HCT116 (cell line): ENCODE measurements at regions of chr9 and their contacts with region 1.

Region 1: DNA sequence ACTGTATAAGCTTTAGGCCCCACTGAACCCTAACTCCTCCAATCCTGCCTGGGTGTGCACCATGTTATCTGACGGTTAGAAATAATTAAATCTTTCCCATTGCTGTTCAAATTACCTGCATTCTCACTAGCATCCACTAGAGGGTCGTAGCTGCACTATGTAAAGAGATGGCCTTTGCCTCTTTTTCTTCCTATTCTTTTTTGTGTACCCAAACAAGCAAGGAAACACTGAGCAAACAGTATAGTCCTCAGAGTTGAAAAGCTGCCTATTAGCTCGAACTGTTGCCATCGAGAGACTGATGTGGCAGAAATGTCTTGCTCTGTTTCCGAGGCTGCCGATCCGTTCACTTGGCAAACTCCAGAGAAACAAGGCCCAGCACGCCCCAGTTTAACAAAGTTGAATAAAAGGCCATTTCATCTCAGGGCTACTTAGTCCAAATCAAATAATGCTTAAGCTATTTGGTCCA is 163.8 kb upstream of the TRPM3 start:
- DNase-seq: peak; percentile 43
- ATAC-seq: peak; percentile 90
- H3K4me3 ChIP-seq: no peak overlapping the region
- H3K27ac ChIP-seq: no peak overlapping the region
- H3K4me1 ChIP-seq: no peaks in the 10 kb centered on the region
- H3K27me3 ChIP-seq: peaks cover 18% of the 10 kb centered on the region
- CTCF ChIP-seq: peak; percentile 56 to 88 (median 81); a peak in 5 of 6 replicates
- POLR2A ChIP-seq: no peak
- RAD21 ChIP-seq: peak; percentile 79

Region 2: DNA sequence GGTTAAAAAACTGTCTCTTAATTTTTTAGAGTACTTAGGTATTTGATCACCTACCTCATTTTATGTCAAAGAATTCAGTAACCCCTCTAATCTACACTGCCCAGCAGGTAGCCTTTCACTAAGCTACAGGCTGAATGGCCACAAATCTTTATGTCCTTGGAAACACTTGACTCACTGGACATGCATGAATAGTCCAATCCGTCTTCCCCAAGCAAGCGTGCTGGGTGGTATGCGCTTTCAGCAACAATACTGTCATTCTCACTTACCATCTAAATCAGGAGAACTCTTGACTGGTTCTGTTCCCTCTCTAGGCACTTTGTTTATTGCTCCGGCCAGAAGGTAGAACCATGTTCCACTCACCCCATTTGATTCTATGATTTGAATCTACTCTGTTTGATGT is 236.9 kb before region 1 on chr9:
- CTCF ChIA-PET with region 1: no interaction called
- POLR2A ChIA-PET with region 1: no interaction called
- RAD21 ChIA-PET with region 1: no interaction called
- intact Hi-C with region 1: no loop called
- DNase-seq: no peak
- ATAC-seq: no peak
- H3K4me3 ChIP-seq: no peak overlapping the region
- H3K27ac ChIP-seq: no peak overlapping the region
- H3K4me1 ChIP-seq: no peaks in the 10 kb centered on the region
- H3K27me3 ChIP-seq: peaks cover 28% of the 10 kb centered on the region
- CTCF ChIP-seq: no peak
- POLR2A ChIP-seq: no peak
- RAD21 ChIP-seq: no peak

Region 3: DNA sequence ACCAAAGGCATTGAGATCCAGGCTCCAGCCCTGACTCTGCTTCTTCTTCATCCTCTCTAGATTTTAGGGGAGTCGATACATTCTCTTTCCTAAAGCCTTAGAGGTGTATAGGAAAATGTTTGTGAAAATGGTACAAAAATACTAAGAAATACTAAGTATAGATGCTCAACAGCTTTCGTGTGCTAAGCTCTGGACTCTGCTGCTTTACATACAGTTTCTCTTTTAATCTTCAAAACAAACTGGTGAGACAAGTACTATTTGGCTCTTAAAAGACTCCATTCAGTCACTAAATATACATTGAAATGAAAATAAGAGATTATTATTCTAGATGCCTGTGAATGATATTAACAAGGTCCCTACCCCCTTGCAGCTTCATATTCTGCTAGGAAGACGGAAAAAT is 10.7 kb after region 1 on chr9:
- CTCF ChIA-PET with region 1: interaction called, 15 read pairs
- POLR2A ChIA-PET with region 1: no interaction called
- RAD21 ChIA-PET with region 1: no interaction called
- intact Hi-C with region 1: no loop called
- DNase-seq: no peak
- ATAC-seq: no peak
- H3K4me3 ChIP-seq: no peak overlapping the region
- H3K27ac ChIP-seq: no peak overlapping the region
- H3K4me1 ChIP-seq: no peaks in the 10 kb centered on the region
- H3K27me3 ChIP-seq: 0 out of 2 replicates have a peak, but pooled peaks cover 4% of the 10 kb centered on the region
- CTCF ChIP-seq: no peak
- POLR2A ChIP-seq: no peak
- RAD21 ChIP-seq: no peak

Region 4: GRCh38 chr9:71638627-71639026 is 353.4 kb after region 1 on chr9:
- CTCF ChIA-PET with region 1: no interaction called
- POLR2A ChIA-PET with region 1: no interaction called
- RAD21 ChIA-PET with region 1: no interaction called
- intact Hi-C with region 1: no loop called
- DNase-seq: no peak
- ATAC-seq: no peak
- H3K4me3 ChIP-seq: no peak overlapping the region
- H3K27ac ChIP-seq: no peak overlapping the region
- H3K4me1 ChIP-seq: no peaks in the 10 kb centered on the region
- H3K27me3 ChIP-seq: no peaks in the 10 kb centered on the region
- CTCF ChIP-seq: no peak
- POLR2A ChIP-seq: no peak
- RAD21 ChIP-seq: no peak

Region 5: DNA sequence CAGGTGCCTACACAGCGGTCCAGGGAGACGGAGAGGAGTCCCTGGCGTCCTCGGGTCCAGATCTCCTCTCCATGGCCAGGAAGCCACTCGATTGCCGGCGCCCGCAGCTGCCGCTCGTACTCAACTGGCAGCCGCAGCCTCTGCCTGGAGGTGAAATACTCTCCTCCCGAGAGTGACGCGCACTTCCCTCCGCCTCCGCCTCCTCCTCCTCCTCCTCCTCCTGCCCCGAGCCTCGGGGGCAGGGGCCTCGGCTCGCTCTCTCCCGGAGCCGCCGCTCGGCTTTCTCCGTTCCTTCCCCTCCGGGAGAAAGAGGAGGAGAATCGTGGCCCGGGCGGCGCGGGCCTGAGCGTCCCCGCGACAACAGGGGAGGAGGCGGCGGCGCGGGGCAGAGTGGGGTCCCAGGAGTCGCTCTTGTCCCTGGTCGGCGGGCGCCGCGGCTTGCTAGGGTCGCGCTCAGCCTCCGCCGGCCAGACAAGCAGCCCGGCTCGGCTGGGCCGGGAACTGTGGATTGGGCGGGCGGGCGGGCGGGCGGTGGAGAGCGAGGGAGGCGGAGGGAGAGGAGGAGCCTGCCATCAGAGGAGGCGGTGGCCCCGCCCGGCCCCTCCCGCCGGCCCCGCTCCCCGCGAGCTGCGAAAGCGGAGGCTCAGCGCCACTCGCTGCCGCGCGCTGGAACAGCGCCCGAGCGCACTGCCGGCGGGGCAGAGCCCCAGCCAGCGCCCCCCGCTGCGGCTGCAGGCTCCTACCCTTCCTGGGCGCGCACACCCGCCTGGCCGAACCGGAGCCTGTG is 483.4 kb after region 1 on chr9 and contains the start of gene CEMIP2:
- CTCF ChIA-PET with region 1: interaction called, 7 read pairs
- POLR2A ChIA-PET with region 1: no interaction called
- RAD21 ChIA-PET with region 1: no interaction called
- intact Hi-C with region 1: loop called (anchors 5 kb)
- DNase-seq: peak; percentile 62
- ATAC-seq: peak; percentile 82
- H3K4me3 ChIP-seq: peak within 1 kb of the TSS; percentile 76 to 82
- H3K27ac ChIP-seq: peak within 1 kb of the TSS; percentile 79
- H3K4me1 ChIP-seq: peaks cover 21 to 46% of the 10 kb centered on the region in 2 experiments
- H3K27me3 ChIP-seq: no peaks in the 10 kb centered on the region
- CTCF ChIP-seq: peak in 2 of 3 experiments; percentile 29 to 43; a peak in 4 of 6 replicates
- POLR2A ChIP-seq: peak; percentile 42
- RAD21 ChIP-seq: peak; percentile 68
- total RNA-seq, gene CEMIP2: 14.3 TPM

Region 6: GRCh38 chr9:71819115-71819739 is 534.0 kb after region 1 on chr9:
- CTCF ChIA-PET with region 1: interaction called, 7 read pairs
- POLR2A ChIA-PET with region 1: no interaction called
- RAD21 ChIA-PET with region 1: no interaction called
- intact Hi-C with region 1: loop called (anchors 5 kb)
- DNase-seq: peak; percentile 10
- ATAC-seq: no peak
- H3K4me3 ChIP-seq: no peak overlapping the region
- H3K27ac ChIP-seq: no peak overlapping the region
- H3K4me1 ChIP-seq: no peaks in the 10 kb centered on the region
- H3K27me3 ChIP-seq: no peaks in the 10 kb centered on the region
- CTCF ChIP-seq: peak; percentile 55 to 81 (median 68); a peak in 5 of 6 replicates
- POLR2A ChIP-seq: no peak
- RAD21 ChIP-seq: peak; percentile 62